Activated CD4-positive, alpha-beta T cell treated with anti-CD3 and anti-CD28 coated beads for 36 hours (primary cell): ENCODE measurements at regions of chr3 and their contacts with region 1.

Region 1: DNA sequence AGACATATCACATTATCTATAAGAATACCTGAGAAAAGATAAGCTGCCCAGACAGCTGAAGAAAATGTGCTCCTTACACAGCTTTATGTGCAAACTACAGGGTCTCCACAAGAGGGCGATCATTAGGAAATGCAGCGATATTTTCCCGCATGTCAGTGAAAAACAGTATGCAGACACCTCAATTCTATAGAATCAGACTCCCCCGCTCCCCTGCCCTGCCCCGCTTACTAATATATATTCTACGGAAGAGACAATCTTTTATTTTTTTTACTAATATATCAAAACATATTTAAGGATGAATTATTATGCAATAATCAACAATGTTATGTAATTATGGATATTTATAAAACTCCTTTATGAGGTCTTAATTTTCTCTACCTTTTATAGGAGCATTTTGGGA is 681.3 kb downstream of the ROBO1 start:
- DNase-seq: peak; percentile 32
- ATAC-seq: no peak
- H3K4me3 Mint-ChIP-seq: no peak overlapping the region
- H3K27ac Mint-ChIP-seq: no peak overlapping the region
- H3K4me1 Mint-ChIP-seq: no peaks in the 10 kb centered on the region
- H3K27me3 Mint-ChIP-seq: no peaks in the 10 kb centered on the region

Region 2: DNA sequence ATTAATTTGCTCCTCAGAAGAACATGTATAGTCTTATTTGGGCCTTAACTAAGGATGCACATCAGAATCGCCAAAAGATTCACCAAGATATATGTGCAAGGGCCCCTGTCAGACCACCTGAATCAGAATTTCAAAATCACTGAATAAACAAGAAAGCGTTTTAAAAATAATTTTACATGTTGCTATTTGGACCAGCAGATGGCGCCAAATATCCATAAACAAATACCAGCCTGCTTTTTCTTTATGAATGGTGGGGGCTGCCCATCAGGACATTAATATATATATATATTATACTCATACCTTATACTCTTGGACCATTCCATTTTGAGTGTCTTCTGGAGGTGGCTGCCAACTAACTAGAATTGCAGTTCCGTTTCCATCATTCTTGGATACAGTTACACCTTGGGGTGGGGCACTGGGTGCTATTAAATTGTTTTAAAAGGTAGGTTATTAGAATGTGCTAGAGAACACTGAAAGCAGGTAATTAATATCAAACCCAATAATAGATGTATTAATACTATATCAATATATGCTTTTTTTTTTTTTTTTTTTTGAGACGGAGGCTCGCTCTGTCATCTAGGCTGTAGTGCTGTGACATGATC is 427.0 kb before region 1 on chr3:
- CTCF ChIA-PET with region 1: no interaction called
- POLR2A ChIA-PET with region 1: no interaction called
- intact Hi-C with region 1: no loop called
- DNase-seq: peak; percentile 42
- ATAC-seq: no peak
- H3K4me3 Mint-ChIP-seq: no peak overlapping the region
- H3K27ac Mint-ChIP-seq: no peak overlapping the region
- H3K4me1 Mint-ChIP-seq: no peaks in the 10 kb centered on the region
- H3K27me3 Mint-ChIP-seq: no peaks in the 10 kb centered on the region

Region 3: GRCh38 chr3:79361748-79362378 is 275.3 kb after region 1 on chr3:
- CTCF ChIA-PET with region 1: interaction called, 8 read pairs
- POLR2A ChIA-PET with region 1: no interaction called
- intact Hi-C with region 1: loop called in 1 of 2 experiments (anchors 5 kb)
- DNase-seq: no peak
- ATAC-seq: no peak
- H3K4me3 Mint-ChIP-seq: no peak overlapping the region
- H3K27ac Mint-ChIP-seq: no peak overlapping the region
- H3K4me1 Mint-ChIP-seq: no peaks in the 10 kb centered on the region
- H3K27me3 Mint-ChIP-seq: no peaks in the 10 kb centered on the region

Region 4: GRCh38 chr3:79497447-79498111 is 411.1 kb after region 1 on chr3:
- CTCF ChIA-PET with region 1: interaction called, 3 read pairs
- POLR2A ChIA-PET with region 1: no interaction called
- intact Hi-C with region 1: loop called in 1 of 2 experiments (anchors 10 kb)
- DNase-seq: no peak
- ATAC-seq: no peak
- H3K4me3 Mint-ChIP-seq: no peak overlapping the region
- H3K27ac Mint-ChIP-seq: no peak overlapping the region
- H3K4me1 Mint-ChIP-seq: no peaks in the 10 kb centered on the region
- H3K27me3 Mint-ChIP-seq: no peaks in the 10 kb centered on the region